Activated CD8-positive, alpha-beta T cell treated with anti-CD3 and anti-CD28 coated beads for 36 hours (primary cell): ENCODE measurements at regions of chrX and their contacts with region 1.

Region 1: GRCh38 chrX:13688958-13689740 is at the start of gene RAB9A:
- DNase-seq: peak; percentile 82
- ATAC-seq: peak; percentile 87
- H3K4me3 Mint-ChIP-seq: peak within 1 kb of the TSS; percentile 84
- H3K27ac Mint-ChIP-seq: peak within 1 kb of the TSS; percentile 97
- H3K4me1 Mint-ChIP-seq: peaks cover 62% of the 10 kb centered on the region
- H3K27me3 Mint-ChIP-seq: no peaks in the 10 kb centered on the region
- CTCF ChIP-seq: no peak
- total RNA-seq, gene RAB9A: 30.8 to 31.7 TPM

Region 2: DNA sequence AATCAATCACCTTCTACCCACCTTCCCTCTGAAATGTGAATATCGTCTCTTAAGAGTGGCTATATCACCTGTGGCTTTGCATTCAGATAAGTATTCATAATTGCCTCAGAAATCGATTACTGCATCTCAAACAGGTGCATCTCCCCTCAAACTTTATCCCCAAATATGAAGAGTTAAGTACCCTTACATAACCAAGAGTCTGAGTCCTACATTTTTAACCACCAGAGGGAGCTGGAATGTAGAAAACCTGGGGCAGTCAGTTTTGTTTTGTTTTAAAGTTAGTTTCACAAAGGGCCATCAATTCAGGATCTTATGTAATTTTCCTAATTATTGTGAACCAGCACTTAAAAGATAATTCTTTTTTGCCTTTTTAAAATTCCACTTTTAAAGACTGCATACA is 30.5 kb before region 1 on chrX:
- CTCF ChIA-PET with region 1: interaction called, 5 read pairs
- POLR2A ChIA-PET with region 1: interaction called, 3 read pairs
- intact Hi-C with region 1: loop called (anchors 5 kb)
- DNase-seq: peak; percentile 14
- ATAC-seq: peak; percentile 34
- H3K4me3 Mint-ChIP-seq: no peak overlapping the region
- H3K27ac Mint-ChIP-seq: peak overlapping the region; percentile 55
- H3K4me1 Mint-ChIP-seq: peaks cover 29% of the 10 kb centered on the region
- H3K27me3 Mint-ChIP-seq: no peaks in the 10 kb centered on the region
- CTCF ChIP-seq: peak; percentile 38

Region 3: DNA sequence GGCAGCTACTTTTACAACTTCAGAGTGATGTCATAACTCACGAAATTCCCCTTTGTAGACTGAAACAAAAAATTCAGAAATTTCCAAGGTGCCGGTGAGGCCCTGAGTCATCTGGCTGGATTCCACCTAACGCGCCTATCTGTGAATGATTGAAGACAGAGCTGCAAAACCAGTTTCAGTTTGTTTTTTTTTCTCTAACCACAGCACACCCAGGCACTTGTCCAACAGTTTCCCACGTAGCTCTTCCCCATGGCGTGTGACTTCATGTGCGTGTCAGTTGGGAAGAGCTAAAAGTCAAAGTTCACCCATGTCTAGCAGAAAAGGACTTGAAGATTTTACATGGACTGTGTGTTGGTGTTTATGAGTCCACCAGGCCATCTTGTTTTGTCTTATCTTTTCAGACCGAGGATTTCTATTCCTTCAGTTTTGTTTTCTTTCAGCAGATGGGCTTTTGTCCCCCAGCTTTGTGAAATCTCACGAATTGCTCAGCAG is 19.9 kb before region 1 on chrX:
- CTCF ChIA-PET with region 1: interaction called, 3 read pairs
- POLR2A ChIA-PET with region 1: interaction called, 19 read pairs
- intact Hi-C with region 1: no loop called
- DNase-seq: peak; percentile 75
- ATAC-seq: peak; percentile 85
- H3K4me3 Mint-ChIP-seq: peak overlapping the region; percentile 59
- H3K27ac Mint-ChIP-seq: peak overlapping the region; percentile 94
- H3K4me1 Mint-ChIP-seq: peaks cover 17% of the 10 kb centered on the region
- H3K27me3 Mint-ChIP-seq: no peaks in the 10 kb centered on the region
- CTCF ChIP-seq: no peak

Region 4: DNA sequence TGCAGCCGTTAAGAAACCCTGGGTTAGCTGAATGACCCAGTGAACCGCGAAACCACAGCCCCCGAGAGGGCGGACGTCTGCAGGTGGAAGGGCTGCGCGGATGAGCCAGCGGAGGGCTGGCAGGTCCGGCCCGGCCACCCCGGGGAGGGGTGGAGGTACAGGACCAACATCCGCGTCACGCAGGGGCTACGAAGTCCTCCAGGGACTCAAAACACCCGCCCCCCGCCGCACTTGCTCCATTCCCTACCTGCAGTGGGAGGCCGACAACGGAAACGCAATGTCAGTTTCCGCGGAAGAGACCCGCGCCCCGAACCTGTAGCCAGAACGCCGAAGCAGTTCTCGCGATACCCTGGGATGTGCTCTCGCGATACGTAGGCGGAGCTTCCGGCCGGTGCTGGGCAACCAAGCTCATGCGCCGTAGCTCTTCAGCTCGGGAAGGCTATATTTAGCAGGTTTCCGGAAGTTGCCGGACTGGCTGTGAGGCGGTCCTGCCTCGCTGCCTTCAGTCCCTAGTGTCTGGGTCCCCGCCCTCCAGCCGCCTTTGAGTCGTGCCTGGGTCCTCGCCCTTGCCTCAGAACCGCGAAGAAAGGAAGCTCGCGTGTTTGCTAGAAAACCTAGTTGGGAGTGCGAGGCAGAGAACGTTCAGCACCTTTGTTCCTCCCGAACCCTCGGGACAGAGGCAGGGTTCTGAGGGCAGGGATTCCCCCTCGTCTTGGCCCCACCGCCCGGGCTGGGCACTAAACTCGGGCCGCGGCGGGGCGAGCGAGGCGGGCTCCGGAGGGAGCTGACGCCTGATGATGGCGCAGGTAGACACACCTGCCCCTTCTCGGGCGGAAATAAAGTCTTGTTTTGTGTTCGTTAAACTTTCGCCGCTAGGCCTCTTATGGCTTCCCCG is 45.4 kb after region 1 on chrX and contains the starts of genes OFD1 and TRAPPC2:
- CTCF ChIA-PET with region 1: interaction called, 4 read pairs
- POLR2A ChIA-PET with region 1: interaction called, 12 read pairs
- intact Hi-C with region 1: loop called (anchors 10 kb)
- DNase-seq: peak; percentile 93
- ATAC-seq: peak; percentile 95
- H3K4me3 Mint-ChIP-seq: peak within 1 kb of the TSS; percentile 88
- H3K27ac Mint-ChIP-seq: peak within 1 kb of the TSS; percentile 94
- H3K4me1 Mint-ChIP-seq: peaks cover 39% of the 10 kb centered on the region
- H3K27me3 Mint-ChIP-seq: no peaks in the 10 kb centered on the region
- CTCF ChIP-seq: no peak
- total RNA-seq, gene OFD1: 32.4 to 34.5 TPM
- total RNA-seq, gene TRAPPC2: 16.0 to 19.2 TPM

Region 5: DNA sequence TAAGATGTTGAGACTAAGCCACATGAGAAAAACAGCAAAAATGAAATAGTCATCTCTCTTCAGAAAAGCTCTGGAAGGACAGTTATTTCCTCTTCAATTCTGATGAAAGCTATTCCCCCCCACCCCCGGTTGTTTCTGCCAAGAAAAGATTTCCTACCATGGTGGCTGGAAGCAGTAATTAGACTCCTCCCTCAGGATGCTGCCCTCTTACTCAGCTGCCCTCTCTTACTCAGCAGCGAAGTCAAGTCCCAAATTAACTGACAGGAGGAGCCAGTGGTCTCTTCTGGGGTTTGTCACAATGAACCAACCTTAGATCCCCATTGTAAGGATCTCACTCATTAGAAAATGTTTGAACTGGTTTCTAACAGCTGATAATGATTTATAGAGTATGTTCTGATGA is 89.8 kb after region 1 on chrX:
- CTCF ChIA-PET with region 1: no interaction called
- POLR2A ChIA-PET with region 1: no interaction called
- intact Hi-C with region 1: no loop called
- DNase-seq: peak; percentile 9
- ATAC-seq: peak; percentile 47
- H3K4me3 Mint-ChIP-seq: no peak overlapping the region
- H3K27ac Mint-ChIP-seq: peak overlapping the region; percentile 50
- H3K4me1 Mint-ChIP-seq: peaks cover 9% of the 10 kb centered on the region
- H3K27me3 Mint-ChIP-seq: no peaks in the 10 kb centered on the region
- CTCF ChIP-seq: no peak